PC-9 (cell line): ENCODE measurements at regions of chr6 and their contacts with region 1.

Region 1: DNA sequence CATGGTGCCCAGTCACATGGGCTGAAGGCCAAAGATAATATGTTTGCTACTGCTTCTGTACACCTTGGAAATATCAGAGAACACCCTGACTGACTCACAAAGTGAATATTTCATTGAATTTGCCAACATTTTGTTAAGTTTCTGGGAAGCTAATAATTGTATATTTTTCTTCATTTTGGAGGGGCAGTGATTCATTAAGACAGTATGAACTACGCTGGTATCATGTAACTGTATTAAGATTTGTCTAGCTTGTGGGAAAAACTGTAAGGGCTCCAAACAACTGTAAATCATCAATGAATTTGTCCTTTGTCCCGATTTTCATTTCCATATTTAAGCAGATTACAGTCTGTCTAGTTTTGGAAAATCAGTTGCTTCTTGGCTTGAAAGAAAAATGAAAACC is 102.4 kb upstream of the CCN2 start:
- DNase-seq: no peak
- H3K4me3 ChIP-seq: no peak overlapping the region
- H3K27ac ChIP-seq: no peak overlapping the region
- H3K4me1 ChIP-seq: peaks cover 7% of the 10 kb centered on the region; the same call in 1 of the 2 replicates
- H3K27me3 ChIP-seq: no peaks in the 10 kb centered on the region
- CTCF ChIP-seq: no peak

Region 2: GRCh38 chr6:132100388-132100990 is 47.0 kb after region 1 on chr6:
- CTCF ChIA-PET with region 1: interaction called, 11 read pairs
- POLR2A ChIA-PET with region 1: no interaction called
- intact Hi-C with region 1: no loop called
- DNase-seq: no peak
- H3K4me3 ChIP-seq: no peak overlapping the region
- H3K27ac ChIP-seq: no peak overlapping the region
- H3K4me1 ChIP-seq: no peaks in the 10 kb centered on the region
- H3K27me3 ChIP-seq: no peaks in the 10 kb centered on the region
- CTCF ChIP-seq: no peak